ENCODE measurements at regions of chr22 and their contacts with region 1.

Region 1: GRCh38 chr22:33873186-33873585 is 47.1 kb downstream of the LARGE1 start:
- DNase-seq: no peak
- ATAC-seq: no peak
- H3K4me3 ChIP-seq: no peak overlapping the region
- H3K4me3 Mint-ChIP-seq: no peak overlapping the region
- H3K27ac ChIP-seq: no peak overlapping the region
- H3K27ac Mint-ChIP-seq: no peak overlapping the region
- H3K4me1 ChIP-seq: peaks cover 5 to 20% of the 10 kb centered on the region in 2 donors
- H3K4me1 Mint-ChIP-seq: peaks cover 36% of the 10 kb centered on the region
- H3K27me3 ChIP-seq: no peaks in the 10 kb centered on the region
- H3K27me3 Mint-ChIP-seq: no peaks in the 10 kb centered on the region
- CTCF ChIP-seq: no peak

Region 2: DNA sequence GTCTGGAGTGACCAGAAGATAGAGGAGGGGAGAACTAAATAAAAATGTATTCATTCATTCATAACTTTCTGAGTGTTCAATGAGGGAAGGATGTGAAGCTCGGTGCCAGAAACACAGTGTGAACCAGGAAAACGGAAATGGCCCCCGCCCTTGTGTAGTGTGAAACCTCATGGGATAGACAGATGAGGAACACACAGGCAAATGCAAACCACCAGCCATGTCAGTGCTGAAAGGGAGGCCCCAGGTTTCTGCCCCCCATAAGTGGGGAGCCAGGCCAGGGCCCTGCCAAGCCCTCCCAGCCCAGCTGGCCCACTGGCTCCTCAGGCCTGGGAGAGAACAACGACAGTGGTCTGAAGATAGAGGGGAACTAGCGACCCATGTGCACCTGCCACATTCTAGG is 16.6 kb after region 1 on chr22:
- CTCF ChIA-PET with region 1: no interaction called
- POLR2A ChIA-PET with region 1: no interaction called
- intact Hi-C with region 1: loop called (anchors 2 kb)
- DNase-seq: peak; percentile 35
- ATAC-seq: peak; percentile 63
- H3K4me3 ChIP-seq: no peak overlapping the region
- H3K4me3 Mint-ChIP-seq: peak overlapping the region; percentile 62
- H3K27ac ChIP-seq: peak overlapping the region in 1 of 2 donors; percentile 35
- H3K27ac Mint-ChIP-seq: peak overlapping the region; percentile 47
- H3K4me1 ChIP-seq: peaks cover 34% of the 10 kb centered on the region in 2 donors
- H3K4me1 Mint-ChIP-seq: peaks cover 69% of the 10 kb centered on the region
- H3K27me3 ChIP-seq: no peaks in the 10 kb centered on the region
- H3K27me3 Mint-ChIP-seq: no peaks in the 10 kb centered on the region
- CTCF ChIP-seq: no peak